ENCODE measurements at regions of chr12 and their contacts with region 1.

Region 1: GRCh38 chr12:4997939-4998338 is 45.7 kb upstream of the KCNA5 start:
- DNase-seq: peak; percentile 53 to 85
- H3K4me3 ChIP-seq: no peak overlapping the region
- CTCF ChIP-seq: no peak
- POLR2A ChIP-seq: no peak

Region 2: DNA sequence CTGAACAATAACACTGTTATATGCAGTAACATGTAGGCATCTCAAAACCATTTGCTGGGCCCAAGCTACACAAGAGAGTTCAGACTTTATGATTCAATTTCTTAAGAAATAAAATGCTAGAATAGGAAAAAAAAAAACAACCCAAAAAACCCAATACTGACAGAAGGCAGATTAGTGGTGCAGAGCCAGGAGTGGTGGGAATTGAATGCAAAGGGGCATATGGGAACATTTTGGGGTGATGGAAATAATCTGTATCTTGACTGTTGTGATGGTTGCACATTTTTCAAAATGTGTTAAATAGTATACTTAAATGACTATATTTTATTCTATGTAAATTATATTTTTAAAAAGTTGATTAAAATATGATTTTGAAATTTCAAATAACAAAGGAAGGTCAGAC is 528.9 kb before region 1 on chr12:
- intact Hi-C with region 1: no loop called
- DNase-seq: no peak
- H3K4me3 ChIP-seq: no peak overlapping the region
- CTCF ChIP-seq: no peak
- POLR2A ChIP-seq: no peak

Region 3: GRCh38 chr12:4780641-4781625 is 217.0 kb before region 1 on chr12:
- intact Hi-C with region 1: no loop called
- DNase-seq: peak in 1 of 2 donors; percentile 56
- H3K4me3 ChIP-seq: no peak overlapping the region
- CTCF ChIP-seq: no peak
- POLR2A ChIP-seq: no peak

Region 4: GRCh38 chr12:4866299-4866698 is 131.6 kb before region 1 on chr12:
- intact Hi-C with region 1: no loop called
- DNase-seq: no peak
- H3K4me3 ChIP-seq: no peak overlapping the region
- CTCF ChIP-seq: no peak
- POLR2A ChIP-seq: no peak

Region 5: DNA sequence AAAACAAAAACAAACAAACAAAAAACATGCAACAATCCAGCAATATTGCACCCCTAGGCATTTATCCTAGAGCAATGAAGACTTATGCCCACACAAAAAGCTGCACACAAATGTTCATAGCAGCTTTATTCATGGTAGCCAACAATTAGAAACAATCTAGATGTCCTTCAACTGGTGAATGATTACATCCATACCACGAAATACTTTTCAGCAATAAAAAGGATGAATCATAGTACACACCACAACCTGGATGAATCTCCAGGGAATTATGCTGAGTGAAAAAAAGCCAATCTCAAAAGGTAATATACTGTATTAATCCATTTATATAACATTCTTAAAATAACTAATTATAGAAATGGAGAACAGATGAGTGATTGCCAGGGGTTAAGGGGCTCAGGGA is 1809.2 kb after region 1 on chr12:
- intact Hi-C with region 1: loop called (anchors 10 kb)
- DNase-seq: no peak
- H3K4me3 ChIP-seq: no peak overlapping the region
- CTCF ChIP-seq: no peak
- POLR2A ChIP-seq: no peak

Measured in lower leg skin (tissue), 4 donors.